Activated T-helper 1 cell treated with anti-CD3 and anti-CD28 coated beads, Interleukin-12 subunit alpha, Interleukin-12 subunit beta, Interleukin-2, Interleukin-4 antibody, amounts not matched to agents 30 ng/mL and 10 ng/mL and 1 ng/mL, durations not matched to agents 14 hours and 24 hours and 36 hours (primary cell): ENCODE measurements at regions of chr17 and their contacts with region 1.

Region 1: DNA sequence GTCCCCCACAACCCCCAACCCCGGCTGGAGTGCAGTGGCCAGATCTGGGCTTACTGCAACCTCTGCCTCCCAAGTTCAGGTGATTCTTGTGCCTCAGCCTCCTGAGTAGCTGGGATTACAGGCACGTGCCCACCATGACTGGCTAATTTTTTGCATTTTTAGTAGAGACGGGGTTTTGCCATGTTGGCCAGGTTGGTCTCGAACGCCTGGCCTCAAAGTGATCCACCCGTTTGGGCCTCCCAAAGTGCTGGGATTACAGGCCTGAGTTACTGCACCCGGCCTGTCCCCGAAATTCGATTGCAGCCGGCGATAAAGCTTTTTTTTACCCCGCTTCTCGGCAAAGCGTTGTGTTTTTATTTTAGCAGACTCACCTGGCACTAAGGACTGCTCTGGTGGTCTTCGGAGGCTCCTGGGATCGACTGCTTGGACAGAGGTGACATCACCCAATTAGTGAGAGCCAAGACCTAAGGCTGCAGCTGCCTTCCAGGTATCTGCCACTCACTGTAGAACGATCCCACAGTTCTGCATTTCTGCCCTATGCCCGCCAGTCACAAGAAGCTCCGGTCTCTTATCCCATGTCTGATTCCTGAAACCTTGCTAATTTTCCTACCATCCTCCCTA is 82.2 kb upstream of the ARL4D start:
- DNase-seq: peak; percentile 38
- H3K4me3 Mint-ChIP-seq: no peak overlapping the region
- H3K27ac Mint-ChIP-seq: peak overlapping the region; percentile 77
- H3K4me1 Mint-ChIP-seq: peaks cover 24% of the 10 kb centered on the region
- H3K27me3 Mint-ChIP-seq: peaks cover 2% of the 10 kb centered on the region

Region 2: GRCh38 chr17:43183921-43184320 is 132.7 kb before region 1 on chr17:
- intact Hi-C with region 1: no loop called
- DNase-seq: no peak
- H3K4me3 Mint-ChIP-seq: no peak overlapping the region
- H3K27ac Mint-ChIP-seq: no peak overlapping the region
- H3K4me1 Mint-ChIP-seq: no peaks in the 10 kb centered on the region
- H3K27me3 Mint-ChIP-seq: no peaks in the 10 kb centered on the region

Region 3: GRCh38 chr17:43211480-43212402 is 104.9 kb before region 1 on chr17 and contains the start of gene TMEM106A:
- intact Hi-C with region 1: loop called (anchors 1 kb)
- DNase-seq: peak; percentile 60
- H3K4me3 Mint-ChIP-seq: peak within 1 kb of the TSS; percentile 97
- H3K27ac Mint-ChIP-seq: peak within 1 kb of the TSS; percentile 90
- H3K4me1 Mint-ChIP-seq: peaks cover 35% of the 10 kb centered on the region
- H3K27me3 Mint-ChIP-seq: no peaks in the 10 kb centered on the region
- total RNA-seq, gene TMEM106A: 18.2 and 19.1 TPM in 2 replicates

Region 4: GRCh38 chr17:43360739-43361505 is 44.3 kb after region 1 on chr17:
- intact Hi-C with region 1: loop called (anchors 1 kb)
- DNase-seq: peak; percentile 92
- H3K4me3 Mint-ChIP-seq: peak overlapping the region; percentile 85
- H3K27ac Mint-ChIP-seq: peak overlapping the region; percentile 100
- H3K4me1 Mint-ChIP-seq: peaks cover 40% of the 10 kb centered on the region
- H3K27me3 Mint-ChIP-seq: no peaks in the 10 kb centered on the region

Region 5: DNA sequence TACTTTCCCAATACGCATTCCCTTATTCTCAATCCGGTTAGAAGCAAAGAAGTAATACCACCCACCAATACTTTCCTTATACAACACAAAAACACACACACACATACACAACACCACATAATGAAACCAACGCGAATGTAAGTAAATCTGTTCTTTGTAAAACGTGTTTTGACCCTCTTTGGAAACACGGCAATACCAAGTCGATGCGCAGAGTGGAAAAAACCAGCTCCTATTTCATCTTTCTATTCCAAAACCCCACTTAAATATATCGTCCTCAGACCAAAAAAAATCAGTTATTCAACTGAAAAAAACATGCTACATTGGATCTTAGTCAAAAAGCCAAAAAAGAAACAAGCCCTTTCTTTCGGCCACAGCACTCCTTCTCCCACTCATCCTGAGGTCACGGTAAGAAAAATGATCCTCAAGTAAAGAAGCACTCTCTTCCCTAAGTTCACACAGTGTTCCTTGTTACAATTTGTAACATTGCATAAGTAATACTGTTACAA is 51.2 kb after region 1 on chr17:
- intact Hi-C with region 1: loop called (anchors 1 kb)
- DNase-seq: peak; percentile 66
- H3K4me3 Mint-ChIP-seq: peak overlapping the region; percentile 91
- H3K27ac Mint-ChIP-seq: peak overlapping the region; percentile 100
- H3K4me1 Mint-ChIP-seq: peaks cover 44% of the 10 kb centered on the region
- H3K27me3 Mint-ChIP-seq: no peaks in the 10 kb centered on the region